ENCODE measurements at regions of chr13 and their contacts with region 1.

Region 1: GRCh38 chr13:114281351-114282040 is at the start of gene UPF3A:
- DNase-seq: peak; percentile 89 to 95 (median 91)
- H3K4me3 ChIP-seq: peak within 1 kb of the TSS; percentile 43 to 79
- H3K4me3 Mint-ChIP-seq: peak within 1 kb of the TSS; percentile 89 to 98 (median 93)
- H3K27ac ChIP-seq: peak within 1 kb of the TSS; percentile 75
- H3K27ac Mint-ChIP-seq: peak within 1 kb of the TSS; percentile 94 to 99 (median 97)
- H3K4me1 ChIP-seq: peaks cover 60% of the 10 kb centered on the region
- H3K4me1 Mint-ChIP-seq: peaks cover 25 to 67% (median 42%) of the 10 kb centered on the region in 4 donors
- H3K27me3 ChIP-seq: no peaks in the 10 kb centered on the region
- H3K27me3 Mint-ChIP-seq: no peaks in the 10 kb centered on the region
- total RNA-seq, gene UPF3A: 85.9 to 91.2 TPM

Region 2: DNA sequence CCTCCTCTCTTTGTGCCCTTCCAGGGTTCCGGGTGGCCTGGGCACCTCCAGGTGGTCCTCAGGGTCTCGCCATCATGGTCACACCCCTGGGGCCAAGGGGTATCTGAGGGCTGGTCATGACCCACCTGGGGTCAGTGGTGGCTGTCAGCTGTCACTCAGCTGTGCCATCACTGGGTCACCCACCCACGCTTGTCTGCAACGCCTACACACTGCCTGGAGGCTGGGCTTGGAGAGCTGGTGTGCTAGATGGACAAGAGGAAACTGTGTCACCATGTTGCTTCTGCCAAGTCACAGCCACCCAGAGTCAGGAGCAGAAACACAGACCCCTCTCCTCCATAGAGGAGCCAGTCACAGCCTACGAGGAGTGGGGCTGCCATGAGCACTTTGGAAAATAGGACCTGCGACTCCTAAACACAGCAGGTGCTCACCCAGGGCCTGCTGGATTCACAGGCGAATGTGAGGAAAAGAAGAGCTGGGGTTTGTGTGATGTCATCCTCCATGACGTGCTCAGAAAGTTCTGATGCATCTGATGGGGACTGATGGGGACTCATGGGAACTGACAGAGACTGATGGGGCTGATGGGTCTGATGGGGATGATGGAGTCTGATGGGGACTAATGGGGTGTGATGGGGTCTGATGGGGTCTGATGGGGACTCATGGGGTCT is 906.9 kb before region 1 on chr13:
- CTCF ChIA-PET with region 1: no interaction called
- POLR2A ChIA-PET with region 1: no interaction called
- intact Hi-C with region 1: no loop called
- DNase-seq: no peak
- H3K4me3 ChIP-seq: no peak overlapping the region
- H3K4me3 Mint-ChIP-seq: no peak overlapping the region
- H3K27ac ChIP-seq: no peak overlapping the region
- H3K27ac Mint-ChIP-seq: no peak overlapping the region
- H3K4me1 ChIP-seq: no peaks in the 10 kb centered on the region
- H3K4me1 Mint-ChIP-seq: no peaks in the 10 kb centered on the region
- H3K27me3 ChIP-seq: no peaks in the 10 kb centered on the region
- H3K27me3 Mint-ChIP-seq: peaks cover 4 to 10% of the 10 kb centered on the region in 2 donors

Region 3: DNA sequence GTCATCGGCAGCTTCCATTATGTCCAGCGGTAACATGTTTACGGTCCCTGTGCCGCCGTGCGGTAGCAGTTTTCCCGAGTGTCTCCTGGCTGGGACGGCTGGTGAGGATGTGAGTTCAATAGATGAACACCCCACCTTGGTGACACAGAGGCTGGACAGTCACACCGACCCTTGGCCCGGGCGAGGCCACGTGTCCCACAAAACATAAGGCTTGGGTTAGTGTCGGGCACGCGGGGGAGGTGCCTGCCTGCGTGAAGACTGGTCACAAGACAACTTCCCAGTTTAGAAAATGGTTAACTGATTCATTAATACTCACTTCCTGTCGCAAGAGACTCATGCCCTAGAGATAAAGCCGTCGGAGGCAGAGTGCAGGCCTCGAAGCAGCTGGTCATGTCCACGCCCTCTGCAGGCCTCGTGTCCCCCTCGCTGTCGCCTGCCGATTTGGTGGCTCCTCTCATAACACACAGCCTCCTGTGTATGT is 166.3 kb before region 1 on chr13:
- CTCF ChIA-PET with region 1: no interaction called
- POLR2A ChIA-PET with region 1: no interaction called
- intact Hi-C with region 1: no loop called
- DNase-seq: no peak
- H3K4me3 ChIP-seq: no peak overlapping the region
- H3K4me3 Mint-ChIP-seq: peak overlapping the region in 6 of 8 donors; percentile 23 to 78 (median 58)
- H3K27ac ChIP-seq: peak overlapping the region; percentile 44
- H3K27ac Mint-ChIP-seq: peak overlapping the region; percentile 74 to 92 (median 80)
- H3K4me1 ChIP-seq: peaks cover 80% of the 10 kb centered on the region
- H3K4me1 Mint-ChIP-seq: peaks cover 50 to 80% (median 66%) of the 10 kb centered on the region in 4 donors
- H3K27me3 ChIP-seq: no peaks in the 10 kb centered on the region
- H3K27me3 Mint-ChIP-seq: no peaks in the 10 kb centered on the region

Region 4: GRCh38 chr13:114234645-114235421 is 46.7 kb before region 1 on chr13 and contains the start of gene CDC16:
- CTCF ChIA-PET with region 1: no interaction called
- POLR2A ChIA-PET with region 1: interaction called, 3 read pairs
- intact Hi-C with region 1: loop called (anchors 2 kb)
- DNase-seq: peak; percentile 63 to 77 (median 71)
- H3K4me3 ChIP-seq: peak within 1 kb of the TSS; percentile 26 to 66
- H3K4me3 Mint-ChIP-seq: peak within 1 kb of the TSS; percentile 83 to 92 (median 89)
- H3K27ac ChIP-seq: peak within 1 kb of the TSS; percentile 46
- H3K27ac Mint-ChIP-seq: peak within 1 kb of the TSS; percentile 64 to 88 (median 75)
- H3K4me1 ChIP-seq: peaks cover 21% of the 10 kb centered on the region
- H3K4me1 Mint-ChIP-seq: peaks cover 16 to 33% (median 27%) of the 10 kb centered on the region in 4 donors
- H3K27me3 ChIP-seq: no peaks in the 10 kb centered on the region
- H3K27me3 Mint-ChIP-seq: peaks cover 3% of the 10 kb centered on the region in 2 donors
- total RNA-seq, gene CDC16: 86.0 to 87.9 TPM

Region 5: GRCh38 chr13:114264886-114265611 is 16.4 kb before region 1 on chr13:
- CTCF ChIA-PET with region 1: interaction called, 3 read pairs
- POLR2A ChIA-PET with region 1: interaction called, 27 read pairs
- intact Hi-C with region 1: loop called (anchors 2 kb)
- DNase-seq: no peak
- H3K4me3 ChIP-seq: no peak overlapping the region
- H3K4me3 Mint-ChIP-seq: peak overlapping the region in 2 of 8 donors; percentile 13 to 59
- H3K27ac ChIP-seq: no peak overlapping the region
- H3K27ac Mint-ChIP-seq: peak overlapping the region in 2 of 7 donors; percentile 39 to 41
- H3K4me1 ChIP-seq: peaks cover 65% of the 10 kb centered on the region
- H3K4me1 Mint-ChIP-seq: peaks cover 42 to 80% (median 56%) of the 10 kb centered on the region in 4 donors
- H3K27me3 ChIP-seq: no peaks in the 10 kb centered on the region
- H3K27me3 Mint-ChIP-seq: no peaks in the 10 kb centered on the region

Region 6: DNA sequence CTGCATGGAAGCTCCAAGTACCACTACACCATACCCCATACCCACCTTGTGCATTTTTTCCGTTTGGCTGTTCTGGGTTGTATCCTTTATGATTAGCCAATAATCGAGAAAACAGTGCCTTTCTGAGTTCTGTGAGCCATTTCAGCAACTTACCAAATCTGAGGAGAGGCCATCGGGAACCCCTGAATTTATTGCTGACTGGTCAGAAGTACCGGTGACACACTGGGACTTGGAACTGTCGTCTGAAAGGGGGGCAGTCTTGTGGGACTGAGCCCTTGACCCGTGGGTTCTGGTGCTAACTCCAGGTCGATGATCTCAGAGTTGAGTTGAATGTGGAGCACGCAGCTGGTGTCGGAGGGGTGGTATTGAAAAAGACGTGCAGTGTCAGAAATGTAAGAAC is 15.0 kb after region 1 on chr13:
- CTCF ChIA-PET with region 1: no interaction called
- POLR2A ChIA-PET with region 1: no interaction called
- intact Hi-C with region 1: no loop called
- DNase-seq: no peak
- H3K4me3 ChIP-seq: no peak overlapping the region
- H3K4me3 Mint-ChIP-seq: no peak overlapping the region
- H3K27ac ChIP-seq: no peak overlapping the region
- H3K27ac Mint-ChIP-seq: peak overlapping the region in 1 of 7 donors; percentile 43
- H3K4me1 ChIP-seq: no peaks in the 10 kb centered on the region
- H3K4me1 Mint-ChIP-seq: peaks cover 0 to 4% (median under 1%) of the 10 kb centered on the region in 4 donors
- H3K27me3 ChIP-seq: no peaks in the 10 kb centered on the region
- H3K27me3 Mint-ChIP-seq: no peaks in the 10 kb centered on the region

Region 7: GRCh38 chr13:114314074-114314912 is 32.8 kb after region 1 on chr13 and contains the start of gene CHAMP1:
- CTCF ChIA-PET with region 1: interaction called, 5 read pairs
- POLR2A ChIA-PET with region 1: interaction called, 24 read pairs
- intact Hi-C with region 1: loop called (anchors 1 kb)
- DNase-seq: peak; percentile 88 to 90 (median 89)
- H3K4me3 ChIP-seq: peak within 1 kb of the TSS; percentile 12 to 88
- H3K4me3 Mint-ChIP-seq: peak within 1 kb of the TSS; percentile 86 to 95 (median 93)
- H3K27ac ChIP-seq: peak within 1 kb of the TSS; percentile 79
- H3K27ac Mint-ChIP-seq: peak within 1 kb of the TSS; percentile 84 to 98 (median 90)
- H3K4me1 ChIP-seq: peaks cover 58% of the 10 kb centered on the region
- H3K4me1 Mint-ChIP-seq: peaks cover 28 to 48% (median 40%) of the 10 kb centered on the region in 4 donors
- H3K27me3 ChIP-seq: no peaks in the 10 kb centered on the region
- H3K27me3 Mint-ChIP-seq: no peaks in the 10 kb centered on the region
- total RNA-seq, gene CHAMP1: 24.0 to 25.1 TPM